AG04449 (cell line): ENCODE measurements at regions of chr6 and their contacts with region 1.

Region 1: DNA sequence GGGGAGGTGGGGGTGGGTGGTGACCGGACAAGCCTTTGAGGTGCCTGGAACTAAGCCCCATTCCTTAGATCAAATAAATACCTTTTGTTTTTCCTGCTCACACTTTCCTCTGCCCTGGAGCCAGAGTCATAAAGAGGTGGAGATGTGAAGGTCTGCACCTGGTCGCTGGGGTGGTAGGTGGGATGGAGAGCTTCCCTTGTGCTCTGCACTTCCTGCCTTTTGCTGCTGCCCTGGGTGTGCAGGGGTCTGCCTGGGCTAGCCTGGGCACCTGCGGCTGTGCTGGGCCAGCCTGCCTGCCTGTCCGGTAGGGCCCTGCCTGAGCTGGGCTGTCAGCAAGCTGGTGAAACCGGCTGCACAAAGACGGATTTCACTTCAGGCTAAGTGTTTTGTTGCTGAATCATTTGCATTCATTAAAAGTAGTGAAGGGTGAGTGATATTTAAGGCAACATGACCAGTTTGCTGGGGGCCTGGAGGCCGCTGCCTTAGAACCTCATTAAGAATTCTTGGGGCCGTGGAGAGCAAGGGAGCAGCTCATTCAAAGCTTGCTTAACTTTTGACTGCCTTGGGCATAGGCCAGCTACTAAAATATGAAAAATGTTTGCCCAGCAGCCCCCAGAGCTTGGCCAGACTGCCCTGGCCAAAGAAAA is 20.5 kb downstream of the PTK7 start:
- DNase-seq: peak; percentile 88
- H3K4me3 ChIP-seq: peak overlapping the region; percentile 25
- CTCF ChIP-seq: no peak

Region 2: GRCh38 chr6:43035495-43036194 is 60.9 kb before region 1 on chr6:
- CTCF ChIA-PET with region 1: no interaction called
- POLR2A ChIA-PET with region 1: no interaction called
- DNase-seq: no peak
- H3K4me3 ChIP-seq: no peak overlapping the region
- CTCF ChIP-seq: no peak

Region 3: GRCh38 chr6:43082806-43083655 is 13.5 kb before region 1 on chr6:
- CTCF ChIA-PET with region 1: interaction called, 10 read pairs
- POLR2A ChIA-PET with region 1: interaction called, 4 read pairs
- DNase-seq: no peak
- H3K4me3 ChIP-seq: no peak overlapping the region
- CTCF ChIP-seq: no peak

Region 4: GRCh38 chr6:43120944-43121913 is 24.7 kb after region 1 on chr6:
- CTCF ChIA-PET with region 1: interaction called, 6 read pairs
- POLR2A ChIA-PET with region 1: interaction called, 15 read pairs
- DNase-seq: peak; percentile 99
- H3K4me3 ChIP-seq: peak overlapping the region; percentile 37
- CTCF ChIP-seq: peak; percentile 17